MCF 10A (cell line): ENCODE measurements at regions of chr4 and their contacts with region 1.

Region 1: GRCh38 chr4:11635359-11636072 is 206.8 kb upstream of the HS3ST1 start:
- DNase-seq: peak; percentile 88
- H3K4me3 Mint-ChIP-seq: no peak overlapping the region
- H3K27ac Mint-ChIP-seq: peak overlapping the region; percentile 49
- H3K4me1 Mint-ChIP-seq: peaks cover 39% of the 10 kb centered on the region
- H3K27me3 Mint-ChIP-seq: no peaks in the 10 kb centered on the region
- CTCF ChIP-seq: no peak

Region 2: DNA sequence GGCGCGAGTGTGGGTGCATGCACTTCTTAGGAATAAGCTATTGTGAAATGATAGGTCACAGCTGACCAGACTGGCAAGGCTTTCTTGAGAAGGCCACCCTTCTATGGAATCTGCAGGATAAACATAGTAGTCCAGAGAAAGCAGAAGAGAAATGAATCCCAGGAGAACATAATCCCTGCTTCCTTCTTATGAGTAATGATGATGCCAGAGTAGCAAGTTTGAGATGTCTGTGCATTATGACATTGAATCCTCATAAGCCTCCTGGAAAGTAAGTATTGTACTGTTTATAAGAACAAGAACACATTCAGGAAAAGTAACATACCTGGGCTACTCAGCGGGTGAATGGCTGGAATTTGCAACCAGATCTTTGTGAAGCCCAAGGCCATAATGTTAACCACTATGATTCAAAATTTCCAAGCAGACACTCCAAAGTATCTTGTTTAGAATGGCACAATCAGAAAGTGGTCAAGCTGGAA is 65.3 kb after region 1 on chr4:
- CTCF ChIA-PET with region 1: interaction called, 5 read pairs
- POLR2A ChIA-PET with region 1: interaction called, 4 read pairs
- intact Hi-C with region 1: loop called (anchors 5 kb)
- DNase-seq: peak; percentile 54
- H3K4me3 Mint-ChIP-seq: no peak overlapping the region
- H3K27ac Mint-ChIP-seq: no peak overlapping the region
- H3K4me1 Mint-ChIP-seq: peaks cover 31% of the 10 kb centered on the region
- H3K27me3 Mint-ChIP-seq: no peaks in the 10 kb centered on the region
- CTCF ChIP-seq: no peak